ENCODE measurements at regions of chr12 and their contacts with region 1.

Region 1: GRCh38 chr12:94101738-94102660 is 46.4 kb upstream of the PLXNC1 start:
- DNase-seq: peak; percentile 93
- ATAC-seq: peak; percentile 94

Region 2: DNA sequence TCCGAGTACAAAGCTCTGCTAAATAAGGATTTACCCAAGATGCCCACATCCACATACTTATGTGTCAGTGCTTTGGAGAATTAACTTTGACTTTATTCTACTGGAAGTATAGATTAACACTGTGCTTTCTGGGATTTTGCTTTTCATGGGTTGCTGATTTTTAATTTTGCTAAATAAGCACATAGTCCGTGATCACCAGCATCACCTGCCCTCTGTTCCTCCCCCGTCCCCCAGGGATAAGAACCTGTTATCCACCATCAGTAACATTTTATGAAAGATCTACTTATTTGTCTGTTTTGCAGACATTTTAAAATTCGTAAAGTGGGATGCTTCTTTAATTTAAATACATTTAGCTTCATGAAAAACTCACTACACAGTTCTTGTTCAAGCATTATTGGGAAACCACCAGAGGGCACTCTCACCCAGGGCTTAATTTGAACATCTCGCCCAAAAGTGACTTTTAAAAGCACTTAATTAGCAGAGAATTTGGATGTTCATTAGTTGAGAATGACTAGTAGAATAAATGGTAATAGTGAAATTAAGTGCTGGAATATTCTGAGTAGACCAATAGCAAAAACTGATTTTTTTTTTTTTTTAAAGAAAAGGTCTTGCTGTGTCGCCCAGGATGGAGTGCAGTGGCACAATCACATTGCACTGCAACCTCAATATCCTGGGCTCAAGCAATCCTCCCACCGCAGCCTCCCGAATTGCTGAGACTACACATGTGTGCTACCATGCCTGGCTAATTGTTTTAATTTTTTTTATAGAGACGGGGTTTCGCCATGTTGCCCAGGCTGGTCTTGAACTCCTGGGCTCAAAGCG is 599.0 kb before region 1 on chr12:
- intact Hi-C with region 1: loop called (anchors 2 kb)
- DNase-seq: no peak
- ATAC-seq: no peak

Region 3: DNA sequence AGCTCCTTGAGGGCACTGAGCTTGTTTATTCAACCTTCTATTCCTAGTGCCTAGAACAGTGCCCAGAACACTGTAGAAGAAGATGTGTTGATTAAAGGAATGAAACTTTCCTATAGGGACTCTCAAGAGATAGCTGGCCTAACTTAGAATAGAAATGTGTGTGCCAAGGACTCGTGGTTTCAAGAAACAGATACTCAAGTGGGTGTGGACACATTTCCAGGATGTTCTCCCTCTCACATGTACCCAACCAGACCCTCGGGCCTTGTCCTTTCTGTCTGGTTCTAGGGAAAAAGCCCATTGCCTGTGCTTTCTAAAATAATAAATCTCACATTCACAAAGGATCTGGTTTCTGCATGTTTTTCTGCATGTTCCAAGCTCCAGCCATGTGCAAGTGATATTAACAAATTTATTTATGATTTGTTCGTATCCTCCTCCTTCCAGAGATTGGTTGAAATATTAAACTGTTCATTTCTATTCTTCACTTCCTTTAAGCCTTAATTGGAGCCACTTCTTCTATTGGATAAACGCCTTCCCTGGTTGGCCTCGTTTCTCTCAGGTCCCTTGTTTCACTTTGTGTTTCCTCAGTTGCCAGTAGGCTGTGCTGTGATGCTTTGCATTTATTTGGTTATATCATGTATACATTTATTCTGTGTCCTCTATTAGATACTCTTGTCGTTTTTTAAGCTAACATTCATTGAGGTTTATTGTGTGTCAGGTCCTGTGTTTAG is 335.0 kb before region 1 on chr12:
- intact Hi-C with region 1: loop called (anchors 5 kb)
- DNase-seq: no peak
- ATAC-seq: peak; percentile 78

Region 4: DNA sequence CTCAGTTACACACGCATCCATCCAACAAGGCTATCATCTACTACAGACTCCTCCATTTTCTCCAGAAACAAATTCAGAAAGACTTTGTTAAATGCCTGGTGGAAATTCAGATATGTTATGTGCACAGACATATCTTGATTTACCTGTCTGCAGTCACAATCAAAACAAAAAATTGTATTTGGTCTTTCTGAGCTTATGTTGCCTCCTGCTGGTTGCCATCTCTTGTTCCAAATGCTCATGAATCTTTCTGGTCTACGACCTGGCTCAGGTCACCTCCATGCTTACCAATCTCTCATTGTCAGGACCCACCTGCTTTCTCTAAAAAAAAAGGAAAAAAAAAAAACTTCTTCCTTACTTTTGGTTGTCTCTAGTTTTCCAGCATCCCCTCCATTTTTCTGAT is 122.8 kb before region 1 on chr12:
- intact Hi-C with region 1: loop called (anchors 10 kb)
- DNase-seq: no peak
- ATAC-seq: peak; percentile 34